GM12878 (cell line): ENCODE measurements at regions of chr4 and their contacts with region 1.

Region 1: GRCh38 chr4:165327211-165328100 is at the start of gene MSMO1:
- DNase-seq: peak; percentile 96
- ATAC-seq: peak; percentile 97
- H3K4me3 ChIP-seq: peak within 1 kb of the TSS; percentile 97
- H3K27ac ChIP-seq: peak within 1 kb of the TSS; percentile 70
- H3K4me1 ChIP-seq: peaks cover 4% of the 10 kb centered on the region
- H3K27me3 ChIP-seq: no peaks in the 10 kb centered on the region
- CTCF ChIP-seq: no peak
- EP300 ChIP-seq: no peak
- POLR2A ChIP-seq: peak; percentile 93
- RAD21 ChIP-seq: no peak
- polyA plus RNA-seq, gene MSMO1: 101 to 136 TPM

Region 2: DNA sequence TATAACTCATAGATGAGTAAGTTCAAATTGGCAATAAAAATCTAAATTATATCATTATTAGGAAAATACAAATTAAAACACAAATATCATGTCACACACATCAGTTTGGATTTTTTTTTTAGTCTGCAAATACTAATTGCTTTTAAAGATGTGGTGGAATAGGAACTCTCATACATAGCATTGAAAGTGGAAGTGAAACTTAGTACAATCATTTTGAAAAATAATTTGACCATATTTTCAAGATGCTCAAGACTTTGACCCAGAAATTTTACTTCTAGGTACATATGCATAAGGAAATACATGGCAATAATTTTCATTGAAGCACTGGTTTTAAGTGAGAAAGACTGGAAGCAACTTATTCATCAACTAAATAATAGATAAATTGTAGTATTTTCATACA is 721.0 kb before region 1 on chr4:
- CTCF ChIA-PET with region 1: no interaction called
- POLR2A ChIA-PET with region 1: no interaction called
- RAD21 ChIA-PET with region 1: no interaction called
- SMC1A ChIA-PET with region 1: no interaction called
- in situ Hi-C with region 1: no loop called
- intact Hi-C with region 1: no loop called
- DNase-seq: no peak
- ATAC-seq: peak; percentile 90
- H3K4me3 ChIP-seq: no peak overlapping the region
- H3K27ac ChIP-seq: no peak overlapping the region
- H3K4me1 ChIP-seq: no peaks in the 10 kb centered on the region
- H3K27me3 ChIP-seq: no peaks in the 10 kb centered on the region
- CTCF ChIP-seq: no peak
- EP300 ChIP-seq: peak in 1 of 2 experiments; percentile 73; a peak in 2 of 4 replicates
- POLR2A ChIP-seq: no peak
- RAD21 ChIP-seq: no peak

Region 3: DNA sequence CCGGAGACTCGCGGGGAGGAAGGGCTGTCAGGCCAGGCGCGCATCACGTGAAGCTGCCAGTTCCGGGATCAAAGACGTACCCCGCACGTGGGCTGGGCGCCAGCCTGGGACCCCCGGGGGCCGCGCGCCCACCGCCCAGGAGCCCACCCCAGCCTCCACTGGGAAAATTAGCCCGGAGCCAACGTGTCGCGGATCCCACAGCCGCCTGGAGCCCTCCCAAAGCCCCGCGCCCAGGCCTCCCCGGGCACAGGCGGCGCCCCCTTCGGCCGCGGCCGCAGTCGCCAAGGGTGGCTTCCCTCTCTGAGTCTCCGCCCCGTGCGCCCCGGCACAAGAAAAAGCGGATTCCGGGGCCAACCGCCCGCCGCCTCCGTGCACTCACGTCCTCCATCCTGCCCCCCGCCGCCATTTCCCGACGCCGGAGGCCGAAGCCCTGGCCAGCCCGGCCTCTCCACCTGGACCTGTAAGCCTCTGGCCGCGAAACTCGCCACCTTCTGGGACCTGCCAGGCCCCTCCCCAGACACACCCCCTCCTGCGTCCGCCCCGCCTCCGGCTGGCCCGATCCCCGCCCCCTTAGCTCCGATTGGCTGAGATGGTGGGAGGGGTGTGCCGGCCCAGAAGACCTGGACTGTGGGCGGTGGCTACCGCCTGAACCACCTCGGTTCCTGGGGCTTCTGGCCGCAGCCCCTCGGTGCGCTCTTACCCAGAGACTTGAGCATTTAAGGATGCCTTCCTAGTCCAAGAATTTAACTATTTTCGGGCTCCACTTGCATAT is 214.9 kb before region 1 on chr4 and contains the start of gene TMEM192:
- CTCF ChIA-PET with region 1: interaction called, 7 read pairs
- POLR2A ChIA-PET with region 1: no interaction called
- RAD21 ChIA-PET with region 1: no interaction called
- SMC1A ChIA-PET with region 1: interaction called, 3 read pairs
- in situ Hi-C with region 1: no loop called
- intact Hi-C with region 1: loop called (anchors 5 kb)
- DNase-seq: peak; percentile 70
- ATAC-seq: peak; percentile 98
- H3K4me3 ChIP-seq: peak within 1 kb of the TSS; percentile 84
- H3K27ac ChIP-seq: peak within 1 kb of the TSS; percentile 90
- H3K4me1 ChIP-seq: no peaks in the 10 kb centered on the region
- H3K27me3 ChIP-seq: no peaks in the 10 kb centered on the region
- CTCF ChIP-seq: peak; percentile 26 to 58 (median 36); a peak in 5 of 6 replicates
- EP300 ChIP-seq: no peak
- POLR2A ChIP-seq: peak; percentile 84
- RAD21 ChIP-seq: no peak
- polyA plus RNA-seq, gene TMEM192: 1.8 to 3.8 TPM

Region 4: GRCh38 chr4:165207431-165208220 is 119.8 kb before region 1 on chr4 and contains the start of gene KLHL2:
- CTCF ChIA-PET with region 1: interaction called, 8 read pairs
- POLR2A ChIA-PET with region 1: interaction called, 24 read pairs
- RAD21 ChIA-PET with region 1: interaction called, 11 read pairs
- SMC1A ChIA-PET with region 1: interaction called, 17 read pairs
- in situ Hi-C with region 1: no loop called
- intact Hi-C with region 1: loop called (anchors 2 kb)
- DNase-seq: no peak
- ATAC-seq: peak; percentile 80
- H3K4me3 ChIP-seq: peak within 1 kb of the TSS; percentile 90
- H3K27ac ChIP-seq: peak within 1 kb of the TSS; percentile 35
- H3K4me1 ChIP-seq: peaks cover 9% of the 10 kb centered on the region
- H3K27me3 ChIP-seq: no peaks in the 10 kb centered on the region
- CTCF ChIP-seq: no peak
- EP300 ChIP-seq: no peak
- POLR2A ChIP-seq: peak; percentile 57
- RAD21 ChIP-seq: no peak
- polyA plus RNA-seq, gene KLHL2: 8.6 TPM

Region 5: DNA sequence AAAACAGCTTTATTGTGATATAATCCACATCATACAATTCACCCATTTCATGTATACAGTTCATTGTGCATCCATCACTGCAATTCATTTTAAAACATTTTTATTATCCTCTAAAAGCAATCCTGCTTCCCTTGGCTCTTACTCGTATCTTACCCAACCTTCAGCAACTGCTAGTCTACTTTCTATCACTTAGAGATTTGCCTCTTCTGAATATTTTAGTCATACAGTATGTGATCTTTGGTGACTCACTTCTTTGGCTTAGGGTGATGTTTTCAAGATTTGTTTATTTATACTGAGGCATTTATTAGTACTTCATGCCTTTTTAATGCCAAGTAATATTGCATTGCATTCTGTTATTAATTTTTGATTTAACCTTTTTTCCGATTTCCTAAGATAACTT is 14.9 kb before region 1 on chr4:
- CTCF ChIA-PET with region 1: interaction called, 10 read pairs
- POLR2A ChIA-PET with region 1: interaction called, 3 read pairs
- RAD21 ChIA-PET with region 1: interaction called, 3 read pairs
- SMC1A ChIA-PET with region 1: interaction called, 14 read pairs
- in situ Hi-C with region 1: no loop called
- intact Hi-C with region 1: no loop called
- DNase-seq: no peak
- ATAC-seq: no peak
- H3K4me3 ChIP-seq: no peak overlapping the region
- H3K27ac ChIP-seq: no peak overlapping the region
- H3K4me1 ChIP-seq: no peaks in the 10 kb centered on the region
- H3K27me3 ChIP-seq: no peaks in the 10 kb centered on the region
- CTCF ChIP-seq: no peak
- EP300 ChIP-seq: no peak
- POLR2A ChIP-seq: no peak
- RAD21 ChIP-seq: no peak

Region 6: DNA sequence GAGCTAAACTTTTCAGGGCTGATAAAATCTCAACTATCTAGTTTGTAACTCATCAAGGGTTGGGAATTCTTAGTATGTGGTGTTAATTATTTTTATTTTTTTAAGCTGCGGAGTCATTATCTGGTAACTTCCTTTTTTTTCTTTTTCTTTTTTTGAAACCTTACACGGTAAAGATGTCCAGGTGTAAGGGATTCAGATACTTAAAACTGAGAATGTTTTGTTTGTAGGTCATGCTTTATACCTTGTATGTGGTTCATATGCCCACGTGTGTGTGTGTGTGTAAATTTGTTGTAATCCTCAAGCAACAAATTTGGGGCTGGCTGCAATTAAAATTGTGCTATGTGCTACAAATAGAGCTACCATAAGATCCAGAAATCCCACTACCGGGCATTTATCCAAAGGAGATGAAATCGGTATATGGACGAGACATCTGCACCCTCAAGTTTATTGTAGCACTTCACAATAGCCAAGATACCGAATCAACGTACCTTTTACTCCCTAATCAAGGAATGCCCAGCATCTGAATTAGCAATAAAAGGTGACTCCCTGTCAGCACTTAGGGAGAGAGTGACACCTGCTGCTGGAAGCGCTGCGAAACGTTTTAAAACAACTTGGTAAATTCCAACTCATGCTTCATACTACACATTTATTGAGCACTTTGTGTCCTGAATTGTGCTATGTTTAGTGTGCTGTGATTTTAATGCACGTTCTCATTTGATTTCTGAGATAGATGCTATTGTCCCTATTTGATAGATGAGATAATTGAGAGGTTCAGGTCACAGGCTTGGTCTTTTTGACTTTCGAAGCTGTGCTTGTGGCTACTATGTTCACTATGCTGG is 16.1 kb after region 1 on chr4:
- CTCF ChIA-PET with region 1: interaction called, 24 read pairs
- POLR2A ChIA-PET with region 1: interaction called, 13 read pairs
- RAD21 ChIA-PET with region 1: interaction called, 4 read pairs
- SMC1A ChIA-PET with region 1: interaction called, 33 read pairs
- in situ Hi-C with region 1: no loop called
- intact Hi-C with region 1: no loop called
- DNase-seq: no peak
- ATAC-seq: peak; percentile 47
- H3K4me3 ChIP-seq: no peak overlapping the region
- H3K27ac ChIP-seq: no peak overlapping the region
- H3K4me1 ChIP-seq: no peaks in the 10 kb centered on the region
- H3K27me3 ChIP-seq: no peaks in the 10 kb centered on the region
- CTCF ChIP-seq: peak; percentile 19 to 51 (median 43); a peak in 5 of 6 replicates
- EP300 ChIP-seq: no peak
- POLR2A ChIP-seq: no peak
- RAD21 ChIP-seq: peak; percentile 57

Region 7: GRCh38 chr4:165394275-165394674 is 66.8 kb after region 1 on chr4:
- CTCF ChIA-PET with region 1: no interaction called
- POLR2A ChIA-PET with region 1: no interaction called
- RAD21 ChIA-PET with region 1: no interaction called
- SMC1A ChIA-PET with region 1: no interaction called
- in situ Hi-C with region 1: no loop called
- intact Hi-C with region 1: no loop called
- DNase-seq: no peak
- ATAC-seq: no peak
- H3K4me3 ChIP-seq: no peak overlapping the region
- H3K27ac ChIP-seq: no peak overlapping the region
- H3K4me1 ChIP-seq: no peaks in the 10 kb centered on the region
- H3K27me3 ChIP-seq: no peaks in the 10 kb centered on the region
- CTCF ChIP-seq: no peak
- EP300 ChIP-seq: no peak
- POLR2A ChIP-seq: no peak
- RAD21 ChIP-seq: no peak

Region 8: DNA sequence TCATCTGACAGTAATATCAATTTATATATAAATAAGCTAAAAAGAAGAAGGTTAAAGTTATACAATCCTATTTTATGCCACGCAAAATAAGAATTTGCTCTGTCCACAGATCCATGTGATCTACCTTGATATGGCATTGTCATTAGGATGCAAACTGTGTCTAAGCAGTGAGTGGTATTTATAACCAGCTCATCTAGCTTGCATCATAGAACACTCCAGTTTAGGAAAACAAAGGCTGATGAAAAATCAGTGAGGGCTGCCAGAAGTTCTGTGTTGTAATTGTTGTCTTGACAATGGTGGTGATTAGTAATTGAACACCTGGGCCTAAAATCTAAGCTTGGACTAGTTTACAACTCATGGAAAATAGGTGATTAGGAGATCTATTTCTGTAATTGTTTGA is 162.3 kb after region 1 on chr4:
- CTCF ChIA-PET with region 1: no interaction called
- POLR2A ChIA-PET with region 1: no interaction called
- RAD21 ChIA-PET with region 1: no interaction called
- SMC1A ChIA-PET with region 1: no interaction called
- in situ Hi-C with region 1: no loop called
- intact Hi-C with region 1: no loop called
- DNase-seq: no peak
- ATAC-seq: no peak
- H3K4me3 ChIP-seq: no peak overlapping the region
- H3K27ac ChIP-seq: no peak overlapping the region
- H3K4me1 ChIP-seq: no peaks in the 10 kb centered on the region
- H3K27me3 ChIP-seq: no peaks in the 10 kb centered on the region
- CTCF ChIP-seq: no peak
- EP300 ChIP-seq: no peak
- POLR2A ChIP-seq: no peak
- RAD21 ChIP-seq: no peak